Posterior vena cava (tissue), 2 donors: ENCODE measurements at regions of chr7 and their contacts with region 1.

Region 1: GRCh38 chr7:146486519-146486918 is 369.9 kb downstream of the CNTNAP2 start:
- DNase-seq: no peak

Region 2: DNA sequence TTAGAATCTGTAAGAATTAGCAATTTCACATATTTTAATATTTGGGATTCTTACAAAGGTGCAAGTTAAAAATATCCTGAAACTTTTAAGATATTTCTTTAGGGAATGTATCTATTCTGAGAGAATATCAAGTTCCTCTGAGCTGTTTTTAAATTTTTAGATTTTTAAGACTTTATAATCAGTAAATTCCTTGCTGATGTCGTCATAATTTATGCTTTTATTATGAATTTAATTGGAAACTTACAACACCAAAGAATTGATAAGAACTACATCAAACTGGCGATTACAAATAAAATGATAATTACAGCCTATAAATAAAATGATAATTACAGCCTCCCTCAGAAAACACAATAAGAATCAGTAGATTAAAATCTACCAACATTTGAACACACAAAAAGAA is 438.3 kb before region 1 on chr7:
- intact Hi-C with region 1: loop called in 1 of 2 experiments (anchors 10 kb)
- DNase-seq: no peak

Region 3: DNA sequence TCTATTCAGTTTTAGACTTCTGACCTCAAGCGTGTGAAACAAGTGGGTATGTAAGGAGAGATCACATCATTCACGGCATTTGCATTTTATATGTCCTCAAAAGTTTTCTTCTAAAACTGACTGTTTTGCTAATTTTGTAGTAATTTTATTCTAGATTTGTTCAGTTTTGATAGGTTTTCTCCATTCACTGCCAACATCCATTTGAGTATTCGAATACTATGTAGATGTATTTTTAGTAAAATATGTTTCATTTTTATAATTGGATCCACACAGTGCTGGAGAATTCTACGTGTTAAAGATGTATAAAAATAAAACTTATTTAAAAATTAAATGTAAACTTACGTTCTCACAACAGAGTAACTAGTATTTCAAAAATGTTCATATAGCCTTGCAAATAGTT is 133.1 kb after region 1 on chr7:
- intact Hi-C with region 1: no loop called
- DNase-seq: no peak